ENCODE measurements at regions of chr7 and their contacts with region 1.

Region 1: DNA sequence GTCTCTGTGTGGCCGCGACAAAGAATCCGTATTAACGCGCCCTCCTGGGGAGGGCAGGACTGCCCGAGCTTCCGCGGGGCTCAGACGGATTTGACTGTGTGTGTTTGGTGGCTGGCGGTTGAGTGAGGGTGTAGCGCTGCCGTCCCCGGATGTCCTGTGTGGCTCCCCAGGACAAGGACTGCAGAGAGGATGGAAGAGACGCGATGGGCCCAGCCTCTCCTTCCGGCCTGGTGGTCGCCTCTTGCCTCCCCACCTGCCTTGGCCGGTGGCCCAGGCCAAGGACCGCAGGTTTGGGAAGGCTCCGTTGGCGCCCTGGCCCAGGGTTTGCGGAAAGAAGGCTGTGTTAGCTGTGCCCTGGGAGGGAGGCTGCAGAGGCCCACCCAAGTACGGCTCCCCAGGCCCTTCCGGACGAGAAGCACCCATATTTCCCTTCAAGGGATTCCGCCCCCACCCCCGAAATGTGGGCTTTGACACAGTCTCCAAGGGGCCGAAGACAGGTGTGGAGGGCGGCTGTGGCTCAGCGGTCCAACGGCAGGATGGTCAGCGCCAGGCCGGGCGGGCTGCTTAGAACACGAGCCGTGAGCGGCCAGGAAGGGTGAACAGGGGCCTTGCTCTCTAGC is 2.3 kb downstream of the UNCX start:
- DNase-seq: peak; percentile 49 to 75
- H3K4me3 ChIP-seq: peak overlapping the region in 2 of 4 experiments; percentile 7 to 10; a peak in 2 of 8 replicates
- H3K27ac ChIP-seq: no peak overlapping the region
- H3K4me1 ChIP-seq: peaks cover 6 to 36% (median 26%) of the 10 kb centered on the region in 4 experiments
- H3K27me3 ChIP-seq: peaks cover 93 to 97% (median 96%) of the 10 kb centered on the region in 4 experiments
- CTCF ChIP-seq: no peak
- EP300 ChIP-seq: no peak
- POLR2A ChIP-seq: no peak
- RAD21 ChIP-seq: no peak

Region 2: GRCh38 chr7:1151653-1152425 is 83.2 kb before region 1 on chr7:
- CTCF ChIA-PET with region 1: no interaction called
- POLR2A ChIA-PET with region 1: no interaction called
- DNase-seq: no peak
- H3K4me3 ChIP-seq: no peak overlapping the region
- H3K27ac ChIP-seq: no peak overlapping the region
- H3K4me1 ChIP-seq: no peaks in the 10 kb centered on the region
- H3K27me3 ChIP-seq: no peaks in the 10 kb centered on the region
- CTCF ChIP-seq: no peak
- EP300 ChIP-seq: no peak
- POLR2A ChIP-seq: no peak
- RAD21 ChIP-seq: no peak

Region 3: DNA sequence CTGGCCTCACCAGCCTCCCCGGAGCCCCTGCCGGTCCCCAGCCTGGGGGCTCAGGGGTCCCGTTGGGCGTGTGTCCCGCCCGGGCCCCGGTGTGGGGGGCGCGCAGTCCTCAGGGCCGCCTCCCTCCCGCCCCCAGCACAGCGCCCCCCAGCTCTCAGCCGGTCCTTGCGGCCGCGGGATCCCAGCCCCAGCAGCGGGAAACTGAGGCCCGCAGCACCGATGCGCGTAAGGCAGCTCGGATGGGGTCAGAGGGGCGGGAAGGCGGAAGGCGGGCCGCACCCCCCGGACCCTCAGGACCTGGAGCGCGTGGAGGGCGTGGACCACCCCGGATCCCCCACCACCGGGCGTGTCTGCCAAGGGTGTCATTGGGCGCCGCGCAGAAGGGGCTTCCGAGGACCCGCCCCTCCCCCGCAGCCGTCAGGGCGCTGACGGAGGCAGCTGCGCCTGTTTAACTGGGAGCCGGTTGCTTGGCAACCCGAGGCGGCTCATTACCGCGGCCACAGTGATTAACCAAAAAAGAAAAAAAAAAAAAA is 12.6 kb after region 1 on chr7:
- CTCF ChIA-PET with region 1: interaction called, 18 read pairs
- POLR2A ChIA-PET with region 1: interaction called, 12 read pairs
- DNase-seq: no peak
- H3K4me3 ChIP-seq: peak overlapping the region in 1 of 4 experiments; percentile 35; a peak in 2 of 8 replicates
- H3K27ac ChIP-seq: no peak overlapping the region
- H3K4me1 ChIP-seq: peaks cover 4 to 29% (median 21%) of the 10 kb centered on the region in 4 experiments
- H3K27me3 ChIP-seq: peaks cover 72 to 86% (median 84%) of the 10 kb centered on the region in 4 experiments
- CTCF ChIP-seq: no peak
- EP300 ChIP-seq: no peak
- POLR2A ChIP-seq: no peak
- RAD21 ChIP-seq: no peak

Region 4: GRCh38 chr7:1480670-1481069 is 245.7 kb after region 1 on chr7:
- CTCF ChIA-PET with region 1: no interaction called
- POLR2A ChIA-PET with region 1: no interaction called
- DNase-seq: no peak
- H3K4me3 ChIP-seq: no peak overlapping the region
- H3K27ac ChIP-seq: no peak overlapping the region
- H3K4me1 ChIP-seq: no peaks in the 10 kb centered on the region
- H3K27me3 ChIP-seq: no peaks in the 10 kb centered on the region
- CTCF ChIP-seq: no peak
- EP300 ChIP-seq: no peak
- POLR2A ChIP-seq: no peak
- RAD21 ChIP-seq: no peak

Measured in H1 (cell line).